ENCODE measurements at regions of chr4 and their contacts with region 1.

Region 1: DNA sequence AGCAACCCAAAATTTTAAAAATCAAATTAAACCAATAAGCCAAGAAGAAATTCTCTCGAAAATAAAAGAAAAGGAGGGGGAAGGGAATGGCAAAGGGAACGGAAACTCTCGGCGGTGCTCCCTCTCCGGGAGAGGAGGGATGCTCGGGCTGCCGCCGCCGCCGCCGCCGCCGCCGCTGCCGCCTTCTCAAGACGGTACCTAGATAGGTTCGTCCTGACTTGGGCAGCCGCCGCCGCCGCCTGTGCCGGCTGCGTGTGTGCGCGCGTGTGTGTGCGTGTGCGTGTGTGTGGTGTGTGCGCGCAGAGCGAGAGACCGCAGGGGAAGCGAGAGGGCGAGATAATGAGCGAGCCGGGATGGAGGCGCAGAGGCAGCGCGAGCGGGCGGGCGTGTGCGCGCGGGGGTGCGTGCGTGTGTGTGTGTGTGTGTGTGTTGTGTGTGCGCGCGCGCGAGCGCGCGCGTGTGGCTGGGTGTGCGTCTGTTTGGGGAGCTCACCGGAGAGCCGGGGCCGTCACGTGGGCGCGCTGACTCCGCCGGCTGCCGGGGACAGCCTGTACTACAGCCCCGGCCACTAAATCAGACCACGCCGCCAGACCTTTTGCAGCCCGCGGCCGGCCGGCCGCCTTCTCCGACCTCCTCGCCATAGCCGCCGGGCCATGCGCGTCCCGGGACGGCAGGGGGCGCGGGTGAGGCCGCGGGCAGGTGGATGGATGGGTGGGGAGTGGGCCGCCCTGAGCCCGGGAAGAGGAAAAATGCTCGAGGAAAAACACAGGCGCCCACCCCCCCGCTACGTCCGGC is 111.6 kb downstream of the DHX15 start:
- DNase-seq: peak; percentile 95
- H3K4me3 ChIP-seq: peak overlapping the region; percentile 50 to 61 (median 55)
- H3K27ac ChIP-seq: peak overlapping the region; percentile 64 to 89 (median 74)
- H3K4me1 ChIP-seq: peaks cover 0 to 33% (median 29%) of the 10 kb centered on the region in 4 donors
- H3K27me3 ChIP-seq: peaks cover 0 to 16% (median 4%) of the 10 kb centered on the region in 3 donors
- CTCF ChIP-seq: peak; percentile 16 to 74 (median 54)
- EP300 ChIP-seq: peak in 1 of 4 donors; percentile 4
- POLR2A ChIP-seq: no peak

Region 2: GRCh38 chr4:24404281-24404680 is 68.4 kb before region 1 on chr4:
- intact Hi-C with region 1: no loop called
- DNase-seq: no peak
- H3K4me3 ChIP-seq: no peak overlapping the region
- H3K27ac ChIP-seq: no peak overlapping the region
- H3K4me1 ChIP-seq: no peaks in the 10 kb centered on the region
- H3K27me3 ChIP-seq: no peaks in the 10 kb centered on the region
- CTCF ChIP-seq: no peak
- EP300 ChIP-seq: no peak
- POLR2A ChIP-seq: no peak

Region 3: GRCh38 chr4:24551492-24552289 is 79.0 kb after region 1 on chr4:
- intact Hi-C with region 1: loop called (anchors 5 kb)
- DNase-seq: no peak
- H3K4me3 ChIP-seq: no peak overlapping the region
- H3K27ac ChIP-seq: peak overlapping the region in 2 of 4 donors; percentile 11 to 19
- H3K4me1 ChIP-seq: peaks cover 0 to 41% (median 21%) of the 10 kb centered on the region in 4 donors
- H3K27me3 ChIP-seq: no peaks in the 10 kb centered on the region
- CTCF ChIP-seq: peak in 1 of 4 experiments; percentile 21
- EP300 ChIP-seq: no peak
- POLR2A ChIP-seq: no peak

Region 4: DNA sequence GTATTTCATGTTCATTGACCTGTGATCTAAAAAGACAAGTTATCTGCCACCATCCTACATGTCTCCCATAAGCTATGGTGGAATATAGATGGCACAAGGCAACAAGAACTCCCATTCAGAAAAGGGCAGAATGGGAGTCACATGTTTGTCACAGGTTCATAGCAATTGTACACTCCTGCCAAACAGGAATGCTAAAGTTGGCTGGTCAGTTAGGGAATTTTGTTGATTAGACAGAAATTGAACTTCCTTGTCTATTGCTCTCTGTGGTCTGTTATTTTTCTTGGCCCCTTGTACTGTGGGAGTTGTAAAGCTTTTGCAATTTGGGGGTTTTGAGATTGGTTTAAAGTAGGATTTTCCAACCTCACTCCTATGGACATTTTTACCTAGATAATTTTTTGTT is 220.9 kb after region 1 on chr4:
- intact Hi-C with region 1: no loop called
- DNase-seq: no peak
- H3K4me3 ChIP-seq: no peak overlapping the region
- H3K27ac ChIP-seq: no peak overlapping the region
- H3K4me1 ChIP-seq: no peaks in the 10 kb centered on the region
- H3K27me3 ChIP-seq: no peaks in the 10 kb centered on the region
- CTCF ChIP-seq: no peak
- EP300 ChIP-seq: no peak
- POLR2A ChIP-seq: no peak

Region 5: DNA sequence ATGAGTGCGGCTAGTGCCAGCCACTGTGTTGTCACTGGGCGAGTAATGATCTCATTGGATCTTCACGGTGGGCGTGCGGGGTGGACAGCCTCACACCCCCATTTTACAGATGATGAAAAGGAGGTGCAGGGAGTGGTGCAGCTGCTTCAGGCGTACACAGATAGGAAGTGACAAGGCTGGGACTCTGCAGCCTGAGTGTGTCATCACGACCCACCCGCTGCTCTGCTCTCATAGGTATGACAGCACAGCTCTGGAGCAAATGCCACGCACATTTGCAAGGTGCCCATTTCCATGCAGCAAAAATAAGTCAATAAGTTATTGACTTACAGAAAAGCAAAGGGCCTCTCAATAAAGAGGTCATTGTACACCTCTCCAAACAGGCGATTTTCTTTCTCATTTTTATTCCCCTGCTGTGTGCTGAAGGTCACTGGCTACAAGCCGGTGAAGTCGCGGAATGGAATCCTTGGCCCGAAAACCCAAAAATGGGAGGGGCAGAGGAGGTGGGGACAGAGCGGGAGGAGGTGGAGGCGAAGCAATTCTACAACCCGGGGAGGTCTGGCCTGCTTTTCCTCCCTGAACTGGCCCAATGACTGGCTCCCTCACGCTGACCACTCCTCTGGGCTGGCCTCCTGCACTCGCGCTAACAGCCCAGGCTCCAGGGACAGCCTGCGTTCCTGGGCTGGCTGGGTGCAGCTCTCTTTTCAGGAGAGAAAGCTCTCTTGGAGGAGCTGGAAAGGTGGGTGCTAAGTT is 322.4 kb after region 1 on chr4 and contains the start of gene SOD3:
- intact Hi-C with region 1: loop called (anchors 10 kb)
- DNase-seq: peak; percentile 95
- H3K4me3 ChIP-seq: peak within 1 kb of the TSS; percentile 5 to 47 (median 37)
- H3K27ac ChIP-seq: peak within 1 kb of the TSS; percentile 80 to 89 (median 86)
- H3K4me1 ChIP-seq: peaks cover 0 to 42% (median 31%) of the 10 kb centered on the region in 4 donors
- H3K27me3 ChIP-seq: peaks cover 0 to 9% (median 0%) of the 10 kb centered on the region in 3 donors
- CTCF ChIP-seq: no peak
- EP300 ChIP-seq: no peak
- POLR2A ChIP-seq: peak in 1 of 2 donors; percentile 69
- total RNA-seq, gene SOD3: 45.3 to 164 (median 95.4) TPM

Region 6: GRCh38 chr4:25030277-25031076 is 557.8 kb after region 1 on chr4 and contains the start of gene LGI2:
- intact Hi-C with region 1: no loop called
- DNase-seq: peak; percentile 74
- H3K4me3 ChIP-seq: peak within 1 kb of the TSS; percentile 29 to 68 (median 58)
- H3K27ac ChIP-seq: peak within 1 kb of the TSS; percentile 69 to 83 (median 76)
- H3K4me1 ChIP-seq: peaks cover 0 to 28% (median 16%) of the 10 kb centered on the region in 4 donors
- H3K27me3 ChIP-seq: no peaks in the 10 kb centered on the region
- CTCF ChIP-seq: no peak
- EP300 ChIP-seq: no peak
- POLR2A ChIP-seq: no peak
- total RNA-seq, gene LGI2: 1.2 to 6.7 (median 3.5) TPM

Region 7: GRCh38 chr4:26466578-26467270 is 1994.0 kb after region 1 on chr4:
- intact Hi-C with region 1: no loop called
- DNase-seq: no peak
- H3K4me3 ChIP-seq: no peak overlapping the region
- H3K27ac ChIP-seq: no peak overlapping the region
- H3K4me1 ChIP-seq: peaks cover 0 to 23% (median 19%) of the 10 kb centered on the region in 4 donors
- H3K27me3 ChIP-seq: no peaks in the 10 kb centered on the region
- CTCF ChIP-seq: no peak
- EP300 ChIP-seq: no peak
- POLR2A ChIP-seq: no peak

Measured in sigmoid colon (tissue), 7 donors.